BJ (cell line): ENCODE measurements at regions of chr19 and their contacts with region 1.

Region 1: DNA sequence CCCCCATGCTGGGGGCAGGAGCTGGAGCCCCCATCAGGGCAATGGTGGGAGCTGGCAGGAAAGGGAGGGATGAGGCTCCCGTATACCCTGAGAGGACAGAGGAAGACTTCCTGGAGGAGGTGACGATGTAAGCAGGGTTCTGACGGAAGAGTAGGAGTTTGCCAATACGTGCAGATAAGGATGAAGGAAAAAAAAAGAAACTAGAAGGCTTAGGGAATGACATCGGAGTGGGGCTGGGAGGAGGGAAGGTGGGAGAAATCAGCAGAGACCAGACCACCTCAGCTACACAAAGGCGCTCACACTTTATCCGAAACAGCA is 32.3 kb downstream of the ARHGEF18 start:
- DNase-seq: no peak
- H3K4me3 ChIP-seq: no peak overlapping the region
- H3K27me3 ChIP-seq: no peaks in the 10 kb centered on the region; the same call in 1 of the 2 replicates
- CTCF ChIP-seq: no peak

Region 2: GRCh38 chr19:7366701-7367420 is 14.2 kb before region 1 on chr19:
- CTCF ChIA-PET with region 1: interaction called, 14 read pairs
- POLR2A ChIA-PET with region 1: no interaction called
- DNase-seq: no peak
- H3K4me3 ChIP-seq: no peak overlapping the region
- H3K27me3 ChIP-seq: peaks cover 2% of the 10 kb centered on the region; the same call in 1 of the 2 replicates
- CTCF ChIP-seq: peak; percentile 18; the same call in 1 of the 2 replicates

Region 3: DNA sequence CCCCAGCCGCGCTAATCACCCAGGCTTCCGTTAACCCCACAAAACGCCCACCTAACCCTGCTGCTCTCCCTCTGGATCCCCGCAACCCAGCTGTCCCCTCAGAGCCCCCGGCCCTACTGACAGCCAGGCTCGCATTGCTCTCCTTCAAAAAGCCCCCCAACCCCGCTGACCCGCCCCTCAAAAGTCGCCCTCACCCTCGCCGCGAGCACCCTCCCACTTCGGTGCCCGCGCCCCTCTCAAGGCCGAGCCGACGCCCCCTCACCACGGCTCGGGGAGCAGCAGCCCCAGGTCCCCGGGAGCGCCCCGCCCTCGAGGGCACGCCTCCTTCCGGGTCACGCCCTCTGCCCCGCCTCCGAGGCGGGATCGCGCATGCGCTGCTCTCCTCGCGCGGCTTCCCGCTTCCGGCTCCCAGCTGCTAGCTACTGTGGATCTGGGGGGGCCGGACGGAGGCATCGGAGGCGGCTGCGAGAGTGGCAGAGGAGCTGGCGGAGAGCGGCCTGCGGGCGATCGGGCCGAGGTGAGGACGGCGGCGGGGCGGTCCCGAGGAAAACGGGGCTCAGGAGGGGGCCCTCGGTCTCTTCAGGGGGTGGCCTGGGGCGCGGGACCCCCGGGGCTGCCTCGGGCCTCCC is 13.8 kb after region 1 on chr19:
- CTCF ChIA-PET with region 1: interaction called, 15 read pairs
- POLR2A ChIA-PET with region 1: interaction called, 3 read pairs
- DNase-seq: peak; percentile 47
- H3K4me3 ChIP-seq: peak overlapping the region; percentile 79
- H3K27me3 ChIP-seq: no peaks in the 10 kb centered on the region
- CTCF ChIP-seq: peak; percentile 21; the same call in 1 of the 2 replicates

Region 4: DNA sequence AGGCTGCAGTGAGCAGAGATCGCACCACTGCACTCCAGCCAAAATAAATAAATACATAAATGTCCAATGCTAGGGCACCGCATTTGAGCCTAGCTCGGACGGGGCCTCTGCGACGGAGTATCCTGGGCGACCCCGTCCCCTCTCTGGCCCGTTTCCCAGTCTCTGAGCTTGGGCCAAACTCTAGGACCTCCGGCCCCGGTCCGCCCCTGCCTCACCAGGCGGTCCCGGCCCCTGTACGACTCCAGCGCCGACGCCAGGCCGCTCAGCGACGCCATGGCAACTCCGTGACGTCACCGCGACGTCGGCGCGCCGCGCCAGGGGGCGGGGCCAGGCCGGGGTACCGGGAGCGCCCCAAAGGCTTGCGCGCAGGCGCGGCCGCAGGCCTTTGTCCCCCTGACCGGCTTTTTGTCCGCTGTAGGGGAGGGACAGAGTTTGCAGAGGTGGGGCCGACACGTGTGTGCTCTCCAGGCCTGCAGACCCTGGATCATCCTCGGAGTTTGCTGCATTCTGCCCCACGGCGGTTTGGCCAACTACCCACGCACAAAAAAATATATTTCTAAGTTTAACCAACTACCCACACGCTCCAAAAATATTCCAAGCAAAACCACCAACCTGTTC is 107.8 kb after region 1 on chr19 and contains the start of gene PEX11G:
- CTCF ChIA-PET with region 1: no interaction called
- POLR2A ChIA-PET with region 1: no interaction called
- DNase-seq: peak; percentile 15
- H3K4me3 ChIP-seq: peak within 1 kb of the TSS; percentile 51
- H3K27me3 ChIP-seq: no peaks in the 10 kb centered on the region
- CTCF ChIP-seq: no peak
- polyA plus RNA-seq, gene PEX11G: 1.9 and 3.8 TPM in 2 replicates